Mammary epithelial cell (primary cell): ENCODE measurements at regions of chr4 and their contacts with region 1.

Region 1: DNA sequence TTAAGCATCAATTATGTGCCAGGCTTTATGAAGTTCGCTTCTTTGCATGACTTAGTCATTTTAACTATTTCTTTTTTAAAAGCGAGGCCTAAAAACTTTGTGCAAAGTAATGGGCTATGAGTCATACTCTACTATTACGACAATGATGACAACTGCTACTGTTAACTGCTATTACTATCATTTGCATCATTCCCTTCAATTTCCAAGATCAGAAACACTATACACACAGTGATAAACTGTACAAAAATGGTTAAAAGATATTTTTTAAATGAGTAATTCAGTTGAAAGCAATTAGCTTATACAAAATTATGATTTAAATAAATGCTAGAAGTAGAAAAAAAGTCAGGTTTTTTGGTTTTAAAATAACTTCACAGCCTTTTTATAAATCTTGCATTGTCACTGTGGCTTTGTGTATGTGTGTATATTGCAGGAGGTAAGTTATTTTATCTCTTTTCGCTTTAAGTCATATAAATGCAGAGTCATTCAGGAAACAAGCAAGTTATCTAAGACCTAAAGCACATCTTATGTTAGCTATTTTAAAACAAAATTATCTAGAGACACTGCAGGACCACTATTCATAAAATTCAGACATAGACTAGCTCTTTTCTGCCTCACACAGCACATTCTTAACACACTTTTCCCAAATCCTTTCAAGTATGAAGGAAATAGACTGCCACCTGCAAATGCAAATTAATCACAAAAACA is 18.5 kb upstream of the CXCL3 start:
- DNase-seq: peak; percentile 62
- H3K4me3 ChIP-seq: no peak overlapping the region
- H3K27ac ChIP-seq: peak overlapping the region; percentile 69
- H3K4me1 ChIP-seq: peaks cover 3% of the 10 kb centered on the region
- H3K27me3 ChIP-seq: no peaks in the 10 kb centered on the region
- CTCF ChIP-seq: no peak

Region 2: DNA sequence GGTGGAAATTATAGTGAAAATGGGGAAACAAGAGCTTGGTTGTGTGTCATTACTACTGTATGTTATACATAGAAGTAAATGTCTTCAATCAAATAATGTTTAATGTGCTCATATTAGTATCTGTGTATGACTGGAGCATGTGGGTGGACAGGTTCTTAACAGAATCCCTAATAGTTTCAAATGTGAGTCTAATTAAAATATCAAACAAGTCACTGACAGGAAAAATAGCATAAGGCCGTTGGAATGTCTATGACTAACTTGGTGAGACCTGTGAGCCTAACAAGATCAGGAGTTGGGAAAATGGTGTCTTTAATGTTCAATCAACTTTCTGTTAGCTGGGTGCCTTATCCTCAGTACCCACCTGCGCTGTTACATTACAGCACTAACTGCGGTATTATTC is 12.3 kb before region 1 on chr4:
- CTCF ChIA-PET with region 1: interaction called, 7 read pairs
- dilution Hi-C with region 1: no loop called
- in situ Hi-C with region 1: no loop called
- intact Hi-C with region 1: loop called (anchors 1 kb)
- DNase-seq: peak; percentile 81
- H3K4me3 ChIP-seq: no peak overlapping the region
- H3K27ac ChIP-seq: peak overlapping the region; percentile 47
- H3K4me1 ChIP-seq: peaks cover 10% of the 10 kb centered on the region
- H3K27me3 ChIP-seq: no peaks in the 10 kb centered on the region
- CTCF ChIP-seq: no peak

Region 3: GRCh38 chr4:74098450-74098994 is 41.5 kb after region 1 on chr4:
- CTCF ChIA-PET with region 1: no interaction called
- dilution Hi-C with region 1: no loop called
- in situ Hi-C with region 1: no loop called
- intact Hi-C with region 1: loop called (anchors 1 kb)
- DNase-seq: no peak
- H3K4me3 ChIP-seq: peak overlapping the region; percentile 71 to 88 (median 85)
- H3K27ac ChIP-seq: peak overlapping the region; percentile 94
- H3K4me1 ChIP-seq: peaks cover 17% of the 10 kb centered on the region
- H3K27me3 ChIP-seq: no peaks in the 10 kb centered on the region
- CTCF ChIP-seq: no peak

Region 4: GRCh38 chr4:74109116-74109869 is 52.3 kb after region 1 on chr4:
- CTCF ChIA-PET with region 1: no interaction called
- dilution Hi-C with region 1: no loop called
- in situ Hi-C with region 1: no loop called
- intact Hi-C with region 1: loop called (anchors 2 kb)
- DNase-seq: peak; percentile 98
- H3K4me3 ChIP-seq: peak overlapping the region in 2 of 3 experiments; percentile 5 to 15
- H3K27ac ChIP-seq: peak overlapping the region; percentile 99
- H3K4me1 ChIP-seq: peaks cover 65% of the 10 kb centered on the region
- H3K27me3 ChIP-seq: no peaks in the 10 kb centered on the region
- CTCF ChIP-seq: no peak

Region 5: GRCh38 chr4:74223801-74224533 is 167.0 kb after region 1 on chr4:
- CTCF ChIA-PET with region 1: no interaction called
- dilution Hi-C with region 1: no loop called
- in situ Hi-C with region 1: no loop called
- intact Hi-C with region 1: no loop called
- DNase-seq: peak; percentile 71
- H3K4me3 ChIP-seq: no peak overlapping the region
- H3K27ac ChIP-seq: no peak overlapping the region
- H3K4me1 ChIP-seq: peaks cover 15% of the 10 kb centered on the region
- H3K27me3 ChIP-seq: no peaks in the 10 kb centered on the region
- CTCF ChIP-seq: no peak